GM10248 (cell line): ENCODE measurements at regions of chr10 and their contacts with region 1.

Region 1: DNA sequence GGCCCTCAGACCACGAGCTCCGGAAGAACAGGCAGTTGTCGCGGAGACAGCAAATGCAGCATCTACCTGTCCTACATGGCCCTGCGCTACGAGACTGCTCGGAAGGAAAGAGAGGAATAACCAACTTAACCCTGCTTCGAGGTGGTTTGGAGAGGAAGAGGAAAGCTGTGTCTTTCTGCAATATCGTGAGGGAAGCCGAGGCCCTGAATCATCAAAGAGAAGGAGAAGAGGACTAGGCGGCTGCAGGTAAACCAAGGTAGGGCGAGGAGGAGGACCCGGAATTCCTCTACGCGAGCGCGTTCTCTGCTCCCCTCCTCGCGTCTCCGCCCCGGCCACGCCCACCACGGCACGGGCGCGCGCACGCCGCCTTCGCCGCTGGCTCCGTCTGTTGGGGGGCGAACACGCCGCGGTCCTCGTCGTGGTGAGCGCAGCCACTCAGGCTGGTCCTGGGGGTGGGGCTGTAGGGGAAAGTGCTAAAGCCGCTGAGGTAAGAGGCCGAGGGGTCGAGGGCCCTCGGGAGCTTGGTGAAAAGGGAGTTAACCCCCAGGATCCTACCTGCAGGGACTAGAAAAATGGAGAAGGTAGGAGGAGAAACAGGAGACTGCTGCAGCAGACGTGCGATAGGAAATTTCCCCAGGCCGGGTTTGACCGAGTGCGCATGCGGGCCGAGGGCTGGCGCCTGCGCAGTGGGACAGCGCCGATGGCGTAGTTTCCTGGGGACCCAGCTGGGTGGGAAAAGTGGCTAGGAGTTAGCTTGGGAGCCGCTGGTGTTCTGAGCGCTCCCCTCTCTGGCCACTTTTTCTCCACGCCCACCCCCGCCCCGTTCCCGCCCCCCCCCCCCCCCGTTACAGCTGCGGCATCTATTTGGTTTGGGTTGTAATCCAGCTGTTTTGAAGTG is at the starts of genes ANAPC16 and ASCC1:
- DNase-seq: peak; percentile 91
- CTCF ChIP-seq: no peak

Region 2: DNA sequence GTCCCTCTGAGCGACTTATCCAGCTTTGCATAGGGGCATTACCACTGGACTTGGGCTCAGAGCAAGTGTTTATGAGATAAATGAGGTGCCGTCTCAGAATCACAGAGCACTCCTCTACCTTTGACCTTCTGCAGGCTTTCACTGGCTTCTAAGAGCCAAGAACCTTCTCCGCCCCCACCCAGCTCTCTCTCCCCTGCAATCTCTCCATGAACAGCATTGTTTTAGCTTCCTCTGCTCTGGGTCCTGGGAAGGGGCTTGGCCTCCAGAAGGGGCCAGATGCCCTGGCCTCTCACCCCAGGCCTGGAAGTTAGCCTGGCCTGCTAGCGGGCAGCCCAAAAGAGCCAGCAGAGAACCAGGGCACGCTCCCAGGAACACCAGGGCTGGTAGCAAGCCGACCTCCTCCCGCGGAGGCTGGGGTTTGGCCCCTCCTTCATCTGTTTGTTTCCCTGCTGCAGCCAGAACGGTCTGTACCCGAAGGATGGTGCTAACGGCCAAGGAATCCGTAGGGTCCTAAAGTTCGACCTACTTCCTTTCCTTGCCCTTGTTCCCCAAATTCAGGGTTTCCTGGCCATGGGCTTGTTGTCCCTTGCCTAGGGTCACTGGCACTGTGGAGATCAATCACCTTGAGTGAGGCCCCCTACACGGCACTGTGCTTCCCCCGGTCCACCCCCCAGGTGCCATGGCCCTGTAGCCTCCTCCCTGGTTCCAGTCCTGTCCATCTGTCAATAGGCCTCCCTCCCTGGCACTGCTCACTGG is 39.1 kb after region 1 on chr10:
- CTCF ChIA-PET with region 1: interaction called, 4 read pairs
- POLR2A ChIA-PET with region 1: interaction called, 13 read pairs
- DNase-seq: peak; percentile 56
- CTCF ChIP-seq: no peak